Body of pancreas (tissue), 4 donors: ENCODE measurements at regions of chr12 and their contacts with region 1.

Region 1: DNA sequence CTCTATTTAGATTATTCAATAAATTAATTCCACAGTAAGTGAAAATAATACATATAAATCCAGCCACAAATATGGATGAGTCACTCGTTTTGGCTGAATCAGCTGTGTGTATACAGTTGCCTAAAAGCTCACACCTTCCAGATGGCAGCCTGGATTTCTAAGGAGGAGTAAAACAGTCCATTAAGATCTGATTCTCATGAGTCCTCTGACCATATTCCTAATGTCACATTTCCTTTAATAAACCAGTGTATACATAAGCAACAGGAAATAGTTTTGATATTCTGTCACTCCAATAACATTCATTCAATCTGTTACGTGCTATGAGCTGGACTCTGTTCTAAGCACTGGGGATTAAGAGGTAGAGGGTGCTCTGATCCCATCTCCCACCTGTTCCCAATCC is 21.8 kb downstream of the MDM1 start:
- DNase-seq: no peak
- ATAC-seq: no peak
- H3K4me3 ChIP-seq: no peak overlapping the region
- H3K27ac ChIP-seq: no peak overlapping the region
- H3K4me1 ChIP-seq: no peaks in the 10 kb centered on the region
- H3K27me3 ChIP-seq: no peaks in the 10 kb centered on the region
- CTCF ChIP-seq: no peak
- POLR2A ChIP-seq: no peak

Region 2: GRCh38 chr12:67780580-67781084 is 529.7 kb before region 1 on chr12:
- intact Hi-C with region 1: no loop called
- DNase-seq: no peak
- ATAC-seq: no peak
- H3K4me3 ChIP-seq: no peak overlapping the region
- H3K27ac ChIP-seq: no peak overlapping the region
- H3K4me1 ChIP-seq: peaks cover 3% of the 10 kb centered on the region
- H3K27me3 ChIP-seq: no peaks in the 10 kb centered on the region
- CTCF ChIP-seq: no peak
- POLR2A ChIP-seq: no peak

Region 3: DNA sequence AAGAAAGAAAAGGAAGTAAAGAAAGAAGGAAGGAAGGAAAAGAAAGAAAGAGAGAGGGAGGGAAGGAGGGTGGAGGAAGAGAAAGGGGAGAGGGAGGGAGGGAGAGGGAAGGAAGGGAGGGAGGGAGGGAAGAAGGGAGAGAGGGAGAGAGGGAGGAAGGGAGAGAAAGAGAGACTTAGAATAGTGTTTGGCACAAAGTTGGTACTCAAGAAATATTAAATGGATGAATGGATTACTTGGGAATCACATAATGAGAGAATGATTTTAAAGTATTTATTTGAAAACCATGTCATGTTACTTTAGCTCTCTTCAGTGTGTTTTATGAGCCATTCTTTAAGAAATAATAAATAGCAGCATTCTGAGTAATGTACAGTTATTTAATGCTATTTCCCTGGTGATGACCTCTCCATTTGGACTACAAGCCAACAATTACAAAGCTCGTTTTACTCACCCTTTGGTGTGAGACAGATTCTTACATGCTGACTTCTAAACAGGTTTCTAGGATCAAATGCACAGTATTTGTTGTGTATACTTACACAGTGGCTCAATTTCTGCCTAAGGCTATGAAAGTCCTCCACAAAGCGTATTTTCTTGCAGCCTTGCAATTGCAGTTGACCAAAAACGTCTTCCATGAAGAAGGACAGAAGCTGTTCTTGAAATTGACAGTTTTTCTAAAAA is 85.6 kb before region 1 on chr12:
- intact Hi-C with region 1: loop called (anchors 5 kb)
- DNase-seq: no peak
- ATAC-seq: no peak
- H3K4me3 ChIP-seq: no peak overlapping the region
- H3K27ac ChIP-seq: no peak overlapping the region
- H3K4me1 ChIP-seq: peaks cover 10% of the 10 kb centered on the region
- H3K27me3 ChIP-seq: no peaks in the 10 kb centered on the region
- CTCF ChIP-seq: no peak
- POLR2A ChIP-seq: no peak

Region 4: GRCh38 chr12:68358532-68359485 is 48.4 kb after region 1 on chr12:
- intact Hi-C with region 1: no loop called
- DNase-seq: peak; percentile 57 to 74 (median 64)
- ATAC-seq: peak; percentile 83
- H3K4me3 ChIP-seq: no peak overlapping the region
- H3K27ac ChIP-seq: peak overlapping the region in 1 of 4 donors; percentile 34
- H3K4me1 ChIP-seq: peaks cover 3% of the 10 kb centered on the region
- H3K27me3 ChIP-seq: no peaks in the 10 kb centered on the region
- CTCF ChIP-seq: peak; percentile 43 to 74 (median 60)
- POLR2A ChIP-seq: no peak

Region 5: DNA sequence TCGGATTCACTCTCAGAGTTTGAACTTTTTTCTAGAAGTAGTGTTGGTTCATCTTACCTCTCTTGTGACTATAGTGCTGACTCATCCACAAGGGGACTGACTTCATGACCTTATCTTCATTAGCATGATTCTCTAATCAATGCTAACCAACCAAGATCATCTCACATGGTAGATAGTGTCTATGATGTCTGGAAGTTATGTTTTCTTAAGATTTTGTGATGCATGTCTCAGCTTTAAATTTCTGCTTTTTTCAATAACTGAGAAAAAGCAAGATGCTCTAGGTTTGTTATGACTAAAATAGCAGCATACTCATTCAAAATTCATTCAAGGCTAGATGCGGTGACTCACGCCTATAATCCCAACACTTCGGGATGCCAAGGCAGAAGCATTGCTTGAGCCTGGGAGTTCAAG is 423.3 kb after region 1 on chr12:
- intact Hi-C with region 1: no loop called
- DNase-seq: no peak
- ATAC-seq: no peak
- H3K4me3 ChIP-seq: no peak overlapping the region
- H3K27ac ChIP-seq: no peak overlapping the region
- H3K4me1 ChIP-seq: no peaks in the 10 kb centered on the region
- H3K27me3 ChIP-seq: no peaks in the 10 kb centered on the region
- CTCF ChIP-seq: no peak
- POLR2A ChIP-seq: no peak